ENCODE measurements at regions of chr19 and their contacts with region 1.

Region 1: DNA sequence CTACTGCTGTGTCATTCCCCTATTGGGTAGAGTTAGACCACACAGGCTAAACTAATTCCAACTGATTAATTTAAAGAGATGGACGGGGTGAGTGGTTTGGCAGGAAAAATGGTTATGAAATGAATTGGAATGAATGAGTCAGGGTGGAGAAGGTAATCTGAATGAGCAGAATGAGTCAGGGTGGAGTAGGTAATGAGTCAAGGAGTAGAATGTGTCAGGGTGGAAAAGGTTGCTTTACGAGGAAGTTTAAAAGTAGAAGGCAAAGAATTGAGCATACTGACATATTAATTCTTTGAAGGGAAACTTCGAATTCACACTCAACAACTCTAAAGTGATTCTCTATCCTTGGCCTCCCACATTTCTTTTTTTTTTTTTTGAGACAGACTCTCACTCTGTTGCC is 12.7 kb upstream of the ZNF121 start:
- DNase-seq: peak; percentile 93
- H3K4me3 Mint-ChIP-seq: peak overlapping the region; percentile 26
- H3K27ac Mint-ChIP-seq: peak overlapping the region; percentile 25
- H3K4me1 Mint-ChIP-seq: peaks cover 14% of the 10 kb centered on the region
- H3K27me3 Mint-ChIP-seq: no peaks in the 10 kb centered on the region
- CTCF ChIP-seq: no peak

Region 2: GRCh38 chr19:9538183-9539058 is 58.6 kb before region 1 on chr19 and contains the start of gene ZNF426:
- CTCF ChIA-PET with region 1: no interaction called
- POLR2A ChIA-PET with region 1: no interaction called
- intact Hi-C with region 1: loop called (anchors 1 kb)
- DNase-seq: peak; percentile 72
- H3K4me3 Mint-ChIP-seq: peak within 1 kb of the TSS; percentile 94
- H3K27ac Mint-ChIP-seq: peak within 1 kb of the TSS; percentile 100
- H3K4me1 Mint-ChIP-seq: peaks cover 7% of the 10 kb centered on the region
- H3K27me3 Mint-ChIP-seq: no peaks in the 10 kb centered on the region
- CTCF ChIP-seq: no peak
- total RNA-seq, gene ZNF426: 8.1 and 13.2 TPM in 2 replicates

Region 3: GRCh38 chr19:9552536-9553274 is 44.3 kb before region 1 on chr19:
- CTCF ChIA-PET with region 1: no interaction called
- POLR2A ChIA-PET with region 1: no interaction called
- intact Hi-C with region 1: no loop called
- DNase-seq: no peak
- H3K4me3 Mint-ChIP-seq: no peak overlapping the region
- H3K27ac Mint-ChIP-seq: no peak overlapping the region
- H3K4me1 Mint-ChIP-seq: no peaks in the 10 kb centered on the region
- H3K27me3 Mint-ChIP-seq: no peaks in the 10 kb centered on the region
- CTCF ChIP-seq: no peak

Region 4: GRCh38 chr19:9818734-9819589 is 221.9 kb after region 1 on chr19 and contains the start of gene FBXL12:
- CTCF ChIA-PET with region 1: no interaction called
- POLR2A ChIA-PET with region 1: no interaction called
- intact Hi-C with region 1: loop called (anchors 1 kb)
- DNase-seq: peak; percentile 100
- H3K4me3 Mint-ChIP-seq: peak within 1 kb of the TSS; percentile 84
- H3K27ac Mint-ChIP-seq: peak within 1 kb of the TSS; percentile 92
- H3K4me1 Mint-ChIP-seq: peaks cover 8% of the 10 kb centered on the region
- H3K27me3 Mint-ChIP-seq: no peaks in the 10 kb centered on the region
- CTCF ChIP-seq: no peak
- total RNA-seq, gene FBXL12: 27.4 and 30.8 TPM in 2 replicates

Measured in MCF 10A (cell line).